HEK293 (cell line): ENCODE measurements at regions of chr9 and their contacts with region 1.

Region 1: DNA sequence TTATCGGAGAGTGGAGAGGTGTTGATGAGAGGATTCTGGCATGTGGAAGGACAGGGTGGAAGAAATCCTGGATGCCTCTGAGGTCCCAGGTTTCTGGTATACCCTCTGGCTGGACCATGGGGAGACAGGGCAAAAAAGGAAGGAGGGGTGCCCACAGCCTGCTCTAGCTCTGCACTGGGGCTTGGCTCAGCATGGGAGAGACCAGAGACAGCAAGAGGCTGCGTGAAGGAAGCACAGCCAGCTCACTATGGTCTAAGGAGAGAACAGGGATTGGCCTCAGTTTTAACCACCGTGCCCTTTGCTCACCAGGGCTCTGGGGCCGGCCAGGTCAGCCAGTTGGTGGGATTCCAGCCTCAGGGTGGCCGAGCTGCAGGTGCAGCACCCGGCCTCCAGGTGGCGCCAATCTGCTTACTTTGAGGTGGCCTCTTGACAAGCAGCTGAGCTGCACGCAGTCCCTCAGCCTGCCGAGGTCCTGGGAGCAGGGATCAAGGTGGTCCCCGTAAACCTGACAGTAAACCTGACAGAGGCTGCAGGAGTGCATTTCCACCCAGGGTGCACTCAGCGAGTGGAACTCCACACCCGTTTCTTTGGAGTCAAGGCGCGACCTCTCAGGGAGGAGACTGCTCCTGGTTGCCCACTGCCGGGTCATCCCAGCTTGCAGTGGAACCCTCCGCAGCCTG is 25.0 kb upstream of the SPTLC1 start:
- H3K4me3 ChIP-seq: no peak overlapping the region
- H3K27ac ChIP-seq: no peak overlapping the region
- H3K4me1 ChIP-seq: no peaks in the 10 kb centered on the region
- CTCF ChIP-seq: peak; percentile 53; the same call in 1 of the 2 replicates

Region 2: GRCh38 chr9:92010705-92011536 is 129.3 kb before region 1 on chr9:
- CTCF ChIA-PET with region 1: no interaction called
- POLR2A ChIA-PET with region 1: no interaction called
- H3K4me3 ChIP-seq: no peak overlapping the region
- H3K27ac ChIP-seq: no peak overlapping the region
- H3K4me1 ChIP-seq: no peaks in the 10 kb centered on the region
- CTCF ChIP-seq: no peak

Region 3: GRCh38 chr9:92122800-92123199 is 17.4 kb before region 1 on chr9:
- CTCF ChIA-PET with region 1: interaction called, 10 read pairs
- POLR2A ChIA-PET with region 1: no interaction called
- H3K4me3 ChIP-seq: no peak overlapping the region
- H3K27ac ChIP-seq: no peak overlapping the region
- H3K4me1 ChIP-seq: no peaks in the 10 kb centered on the region
- CTCF ChIP-seq: no peak

Region 4: DNA sequence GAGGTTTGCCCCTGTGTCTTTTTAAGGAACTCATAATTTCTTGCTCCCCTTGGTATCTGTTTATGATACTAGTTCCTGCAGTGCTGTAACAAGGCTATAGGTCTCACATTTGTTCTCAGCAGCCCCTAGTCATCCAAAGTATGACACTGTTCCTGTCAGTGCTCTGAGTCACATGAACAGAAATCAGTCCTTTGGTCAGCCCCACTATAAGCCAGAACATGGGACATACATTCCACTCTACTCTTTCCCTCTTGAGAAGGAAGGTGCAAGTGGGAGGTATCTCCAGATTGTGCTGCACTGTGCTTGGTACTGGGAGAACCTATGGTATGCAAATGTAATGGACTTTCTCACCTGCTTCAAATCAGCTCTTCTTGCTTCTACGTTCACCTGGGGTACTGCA is 66.3 kb after region 1 on chr9:
- CTCF ChIA-PET with region 1: interaction called, 23 read pairs
- POLR2A ChIA-PET with region 1: no interaction called
- H3K4me3 ChIP-seq: no peak overlapping the region
- H3K27ac ChIP-seq: no peak overlapping the region
- H3K4me1 ChIP-seq: no peaks in the 10 kb centered on the region
- CTCF ChIP-seq: no peak

Region 5: DNA sequence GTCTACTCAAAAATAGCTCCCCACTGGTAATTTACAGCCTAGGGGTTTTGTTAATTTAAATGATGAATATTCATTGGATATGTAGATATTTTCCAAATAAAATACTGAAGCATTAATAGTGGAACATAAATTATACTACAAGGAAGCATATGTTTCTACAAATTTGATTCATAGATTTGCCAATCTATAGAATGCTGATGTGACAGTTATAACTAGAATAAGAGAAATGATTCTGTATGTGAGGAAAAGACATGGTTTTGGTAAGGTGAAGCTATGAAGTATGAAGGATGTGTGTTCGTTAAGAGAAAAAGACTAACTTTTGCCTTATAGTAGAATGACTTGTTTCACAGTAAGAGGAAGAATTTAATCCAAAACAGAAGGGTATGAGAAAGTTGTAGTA is 92.0 kb after region 1 on chr9:
- CTCF ChIA-PET with region 1: interaction called, 25 read pairs
- POLR2A ChIA-PET with region 1: no interaction called
- H3K4me3 ChIP-seq: no peak overlapping the region
- H3K27ac ChIP-seq: no peak overlapping the region
- H3K4me1 ChIP-seq: no peaks in the 10 kb centered on the region
- CTCF ChIP-seq: no peak

Region 6: GRCh38 chr9:92292338-92293074 is 152.3 kb after region 1 on chr9:
- CTCF ChIA-PET with region 1: interaction called, 15 read pairs
- POLR2A ChIA-PET with region 1: no interaction called
- H3K4me3 ChIP-seq: peak overlapping the region; percentile 98
- H3K27ac ChIP-seq: no peak overlapping the region
- H3K4me1 ChIP-seq: no peaks in the 10 kb centered on the region; the same call in 1 of the 2 replicates
- CTCF ChIP-seq: no peak

Region 7: GRCh38 chr9:92634712-92635605 is 494.7 kb after region 1 on chr9:
- CTCF ChIA-PET with region 1: interaction called, 28 read pairs
- POLR2A ChIA-PET with region 1: no interaction called
- H3K4me3 ChIP-seq: no peak overlapping the region
- H3K27ac ChIP-seq: no peak overlapping the region
- H3K4me1 ChIP-seq: no peaks in the 10 kb centered on the region
- CTCF ChIP-seq: peak; percentile 88